ENCODE measurements at regions of chr7 and their contacts with region 1.

Region 1: DNA sequence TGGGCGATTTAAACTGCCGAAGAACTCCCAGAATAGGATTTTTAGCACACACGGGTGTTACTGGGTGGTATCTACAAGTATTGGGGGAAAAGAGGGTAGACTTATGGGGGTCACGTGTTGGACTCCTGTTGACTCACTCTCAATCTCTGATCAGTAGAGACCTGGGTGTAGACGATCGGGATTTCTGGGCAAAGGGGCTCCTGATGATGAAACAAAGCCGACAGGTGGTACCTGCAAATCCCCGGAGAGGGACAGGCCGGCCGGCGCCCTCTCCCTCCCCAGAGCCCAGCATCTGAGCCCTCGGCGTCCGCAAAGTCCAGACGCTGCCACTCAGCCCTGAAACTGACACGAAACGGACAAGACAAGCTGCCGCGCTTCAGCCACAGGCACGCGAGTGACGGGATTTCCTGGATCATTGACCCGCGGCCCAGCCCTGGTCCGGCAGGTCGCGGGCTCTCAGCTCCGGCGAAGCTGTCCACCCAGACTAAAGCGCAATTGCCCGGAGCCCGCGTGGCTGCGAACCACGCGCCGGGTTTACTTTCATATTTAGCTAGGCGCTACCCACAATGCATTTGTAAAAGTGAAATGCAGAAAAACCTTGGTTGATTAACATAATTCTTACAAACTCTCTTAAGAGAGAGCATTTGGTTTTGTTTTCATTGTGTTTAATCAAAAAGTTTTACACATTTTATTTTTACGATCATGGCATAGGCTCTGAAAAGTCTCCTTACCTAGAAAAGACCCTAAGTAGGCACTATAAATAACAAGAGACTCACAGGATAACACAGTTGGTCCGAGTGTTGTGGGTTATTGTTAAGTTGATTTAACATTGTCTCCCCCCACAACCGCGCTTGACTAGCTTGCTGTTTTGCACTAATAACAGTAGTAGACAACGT is 56.9 kb upstream of the EZH2 start:
- DNase-seq: peak; percentile 71
- H3K4me3 Mint-ChIP-seq: peak overlapping the region; percentile 91
- H3K27ac Mint-ChIP-seq: peak overlapping the region; percentile 91
- H3K4me1 Mint-ChIP-seq: peaks cover 22% of the 10 kb centered on the region
- H3K27me3 Mint-ChIP-seq: no peaks in the 10 kb centered on the region

Region 2: GRCh38 chr7:148698397-148699023 is 242.4 kb before region 1 on chr7 and contains the start of gene CUL1:
- CTCF ChIA-PET with region 1: interaction called, 3 read pairs
- POLR2A ChIA-PET with region 1: interaction called, 18 read pairs
- DNase-seq: peak; percentile 87
- H3K4me3 Mint-ChIP-seq: peak within 1 kb of the TSS; percentile 87
- H3K27ac Mint-ChIP-seq: peak within 1 kb of the TSS; percentile 77
- H3K4me1 Mint-ChIP-seq: peaks cover 53% of the 10 kb centered on the region
- H3K27me3 Mint-ChIP-seq: peaks cover 2% of the 10 kb centered on the region
- total RNA-seq, gene CUL1: 46.9 to 48.7 TPM

Region 3: GRCh38 chr7:148884299-148885022 is 56.5 kb before region 1 on chr7:
- CTCF ChIA-PET with region 1: interaction called, 15 read pairs
- POLR2A ChIA-PET with region 1: interaction called, 59 read pairs
- DNase-seq: peak; percentile 95
- H3K4me3 Mint-ChIP-seq: peak overlapping the region; percentile 84
- H3K27ac Mint-ChIP-seq: peak overlapping the region; percentile 93
- H3K4me1 Mint-ChIP-seq: peaks cover 29% of the 10 kb centered on the region
- H3K27me3 Mint-ChIP-seq: no peaks in the 10 kb centered on the region

Region 4: DNA sequence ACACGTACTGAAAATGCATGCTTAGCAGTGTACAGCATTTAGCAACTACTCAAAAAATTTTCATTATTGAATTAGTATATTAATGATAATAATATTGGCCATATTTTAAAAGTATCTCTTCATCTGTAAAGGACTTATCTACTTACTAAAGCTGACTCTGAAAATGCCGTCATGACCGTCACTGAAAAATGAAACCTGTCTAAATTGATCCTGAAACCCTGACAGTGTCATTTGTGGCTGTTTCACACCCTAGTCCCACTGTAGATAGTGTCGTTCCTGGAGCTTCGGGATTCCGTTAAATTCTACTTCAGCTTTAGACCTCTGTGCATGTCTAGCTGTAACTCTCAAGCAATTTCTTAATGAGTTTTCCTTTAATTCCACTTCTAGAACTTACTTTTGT is 21.1 kb before region 1 on chr7:
- CTCF ChIA-PET with region 1: interaction called, 19 read pairs
- POLR2A ChIA-PET with region 1: interaction called, 39 read pairs
- DNase-seq: no peak
- H3K4me3 Mint-ChIP-seq: peak overlapping the region; percentile 12
- H3K27ac Mint-ChIP-seq: no peak overlapping the region
- H3K4me1 Mint-ChIP-seq: peaks cover 38% of the 10 kb centered on the region
- H3K27me3 Mint-ChIP-seq: no peaks in the 10 kb centered on the region

Region 5: GRCh38 chr7:148987010-148987750 is 46.2 kb after region 1 on chr7:
- CTCF ChIA-PET with region 1: interaction called, 5 read pairs
- POLR2A ChIA-PET with region 1: interaction called, 12 read pairs
- DNase-seq: peak; percentile 86
- H3K4me3 Mint-ChIP-seq: peak overlapping the region; percentile 95
- H3K27ac Mint-ChIP-seq: peak overlapping the region; percentile 86
- H3K4me1 Mint-ChIP-seq: peaks cover 48% of the 10 kb centered on the region
- H3K27me3 Mint-ChIP-seq: peaks cover 31% of the 10 kb centered on the region